ENCODE measurements at regions of chr1 and their contacts with region 1.

Region 1: DNA sequence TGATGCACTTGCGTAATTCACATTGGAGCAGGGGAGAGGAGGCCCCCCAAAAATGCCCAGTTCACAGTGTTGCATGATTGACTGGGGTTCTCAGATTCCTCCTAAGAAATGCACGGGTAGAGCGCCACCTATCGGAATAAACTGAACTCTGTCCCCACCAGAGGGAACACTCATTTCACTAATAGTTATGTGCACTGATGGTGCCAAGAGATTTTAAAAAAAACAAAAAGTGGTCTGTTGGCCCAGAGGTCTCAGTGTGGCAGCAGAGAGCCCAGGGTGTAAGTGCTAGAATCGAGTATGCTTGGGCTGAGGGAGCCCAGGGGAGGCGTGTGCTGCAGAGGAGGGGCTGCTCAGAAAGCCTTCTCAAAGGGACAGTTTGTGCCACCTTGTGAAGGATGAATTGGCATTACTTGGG is 6.9 kb downstream of the PINK1 start:
- DNase-seq: peak; percentile 46 to 58 (median 54)
- H3K4me3 ChIP-seq: no peak overlapping the region
- H3K4me3 Mint-ChIP-seq: peak overlapping the region in 1 of 8 donors; percentile 21
- H3K27ac ChIP-seq: no peak overlapping the region
- H3K27ac Mint-ChIP-seq: peak overlapping the region in 1 of 7 donors; percentile 31
- H3K4me1 ChIP-seq: no peaks in the 10 kb centered on the region
- H3K4me1 Mint-ChIP-seq: peaks cover 0 to 6% (median 5%) of the 10 kb centered on the region in 4 donors
- H3K27me3 ChIP-seq: no peaks in the 10 kb centered on the region
- H3K27me3 Mint-ChIP-seq: no peaks in the 10 kb centered on the region

Region 2: DNA sequence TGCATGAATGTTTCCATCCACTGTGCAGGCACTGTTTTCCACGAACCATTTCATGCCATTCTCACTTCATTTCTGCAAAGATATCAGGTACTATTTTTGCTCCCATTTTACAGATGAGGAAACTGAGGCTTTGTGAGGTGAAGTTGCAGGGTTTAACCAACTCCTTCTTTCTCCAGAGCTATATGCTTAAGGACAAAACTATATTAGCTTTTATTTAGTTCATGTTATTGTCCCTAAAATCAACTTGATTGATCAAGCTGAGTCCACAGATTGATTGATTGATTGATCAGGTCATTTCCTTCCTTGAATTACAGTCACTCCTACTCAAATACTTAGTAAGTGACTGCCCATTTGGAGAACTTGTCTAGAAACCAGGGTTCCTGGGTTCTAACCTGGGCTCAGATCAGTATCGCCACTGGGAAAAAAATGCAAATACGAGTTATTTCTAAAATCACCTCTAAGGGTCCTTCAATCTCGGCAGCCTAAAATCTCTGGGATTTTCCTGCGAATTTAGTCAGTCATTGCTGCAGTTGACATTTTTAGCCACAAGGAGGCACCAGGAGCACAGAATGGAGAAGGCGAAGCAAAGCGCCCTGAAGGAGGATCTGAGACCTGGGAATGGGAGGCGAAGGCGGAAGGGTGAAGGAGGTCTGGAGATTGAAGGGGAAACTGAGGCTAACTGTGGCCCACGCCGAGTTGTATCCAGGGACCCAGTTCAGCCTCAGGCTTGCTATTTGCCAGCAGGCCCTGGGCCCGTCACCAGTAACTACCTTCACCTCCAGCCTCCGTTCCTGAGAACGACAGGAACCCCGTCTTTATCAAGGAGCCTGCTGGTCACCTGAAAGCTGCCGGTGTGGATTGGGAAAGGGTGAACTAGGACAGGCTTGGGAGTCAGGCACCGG is 118.0 kb before region 1 on chr1:
- CTCF ChIA-PET with region 1: interaction called, 21 read pairs
- POLR2A ChIA-PET with region 1: no interaction called
- intact Hi-C with region 1: no loop called
- DNase-seq: peak; percentile 44 to 63 (median 59)
- H3K4me3 ChIP-seq: no peak overlapping the region
- H3K4me3 Mint-ChIP-seq: no peak overlapping the region
- H3K27ac ChIP-seq: no peak overlapping the region
- H3K27ac Mint-ChIP-seq: no peak overlapping the region
- H3K4me1 ChIP-seq: no peaks in the 10 kb centered on the region
- H3K4me1 Mint-ChIP-seq: peaks cover 0 to 3% (median 1%) of the 10 kb centered on the region in 4 donors
- H3K27me3 ChIP-seq: no peaks in the 10 kb centered on the region
- H3K27me3 Mint-ChIP-seq: peaks cover 6 to 21% of the 10 kb centered on the region in 2 donors

Region 3: DNA sequence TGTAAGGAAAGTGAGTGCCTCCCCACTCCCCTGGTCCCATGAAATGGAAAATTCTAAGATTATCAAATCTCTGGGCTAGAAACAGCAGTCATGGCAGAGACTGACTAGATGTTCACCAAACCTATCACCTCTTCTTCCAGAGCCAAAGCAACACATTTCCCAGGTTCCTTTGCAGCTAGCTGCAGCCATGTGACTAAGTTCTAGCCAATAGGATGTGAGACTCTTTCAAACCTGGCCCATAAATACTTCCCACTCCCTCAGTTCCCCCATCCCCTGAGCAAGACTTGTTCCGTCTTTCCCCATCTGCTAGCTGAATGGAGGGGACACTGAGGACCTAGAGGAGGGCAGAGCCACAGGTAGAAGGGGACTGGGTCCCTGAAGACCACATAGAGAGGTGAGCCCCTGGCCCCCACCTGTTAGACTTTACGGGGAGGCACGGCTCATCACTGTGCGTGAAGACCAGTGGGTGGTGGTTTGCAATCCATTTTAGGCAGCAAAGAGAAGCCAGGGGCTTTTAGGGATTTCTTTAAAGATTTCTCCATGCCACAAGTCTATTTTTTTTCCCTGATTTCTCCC is 70.6 kb before region 1 on chr1:
- CTCF ChIA-PET with region 1: no interaction called
- POLR2A ChIA-PET with region 1: no interaction called
- intact Hi-C with region 1: no loop called
- DNase-seq: no peak
- H3K4me3 ChIP-seq: no peak overlapping the region
- H3K4me3 Mint-ChIP-seq: no peak overlapping the region
- H3K27ac ChIP-seq: no peak overlapping the region
- H3K27ac Mint-ChIP-seq: no peak overlapping the region
- H3K4me1 ChIP-seq: no peaks in the 10 kb centered on the region
- H3K4me1 Mint-ChIP-seq: no peaks in the 10 kb centered on the region
- H3K27me3 ChIP-seq: no peaks in the 10 kb centered on the region
- H3K27me3 Mint-ChIP-seq: peaks cover 28 to 30% of the 10 kb centered on the region in 2 donors

Region 4: GRCh38 chr1:20682571-20683236 is 42.5 kb after region 1 on chr1:
- CTCF ChIA-PET with region 1: no interaction called
- POLR2A ChIA-PET with region 1: no interaction called
- intact Hi-C with region 1: no loop called
- DNase-seq: no peak
- H3K4me3 ChIP-seq: no peak overlapping the region
- H3K4me3 Mint-ChIP-seq: no peak overlapping the region
- H3K27ac ChIP-seq: no peak overlapping the region
- H3K27ac Mint-ChIP-seq: no peak overlapping the region
- H3K4me1 ChIP-seq: no peaks in the 10 kb centered on the region
- H3K4me1 Mint-ChIP-seq: peaks cover 5 to 10% (median 7%) of the 10 kb centered on the region in 4 donors
- H3K27me3 ChIP-seq: no peaks in the 10 kb centered on the region
- H3K27me3 Mint-ChIP-seq: peaks cover 12 to 13% of the 10 kb centered on the region in 2 donors

Measured in CD4-positive, alpha-beta memory T cell (primary cell).